Psoas muscle (tissue), 8 donors: ENCODE measurements at regions of chr19 and their contacts with region 1.

Region 1: GRCh38 chr19:37655689-37656371 is 565 bp upstream of the ZFP30 start:
- DNase-seq: peak; percentile 87 to 92
- ATAC-seq: peak; percentile 88 to 93 (median 90)
- H3K4me3 ChIP-seq: peak overlapping the region; percentile 75
- H3K27ac ChIP-seq: peak overlapping the region; percentile 90
- H3K4me1 ChIP-seq: peaks cover 15% of the 10 kb centered on the region
- H3K27me3 ChIP-seq: no peaks in the 10 kb centered on the region
- CTCF ChIP-seq: no peak

Region 2: GRCh38 chr19:37594304-37594981 is 61.4 kb before region 1 on chr19 and contains the starts of genes ZNF540 and ZNF571:
- intact Hi-C with region 1: loop called (anchors 5 to 10 kb)
- DNase-seq: peak; percentile 93 to 95
- ATAC-seq: peak; percentile 99 to 100 (median 99)
- H3K4me3 ChIP-seq: peak within 1 kb of the TSS; percentile 78
- H3K27ac ChIP-seq: peak within 1 kb of the TSS; percentile 82
- H3K4me1 ChIP-seq: peaks cover 16% of the 10 kb centered on the region
- H3K27me3 ChIP-seq: no peaks in the 10 kb centered on the region
- CTCF ChIP-seq: no peak
- total RNA-seq, gene ZNF540: 0.27 to 4.9 (median 1.4) TPM
- total RNA-seq, gene ZNF571: 1.3 to 2.4 (median 1.8) TPM

Region 3: GRCh38 chr19:37691881-37692504 is 36.2 kb after region 1 on chr19:
- intact Hi-C with region 1: loop called in 1 of 2 experiments (anchors 5 kb)
- DNase-seq: peak; percentile 85 to 86
- ATAC-seq: peak; percentile 73 to 97 (median 92)
- H3K4me3 ChIP-seq: peak overlapping the region; percentile 72
- H3K27ac ChIP-seq: peak overlapping the region; percentile 74
- H3K4me1 ChIP-seq: peaks cover 3% of the 10 kb centered on the region
- H3K27me3 ChIP-seq: no peaks in the 10 kb centered on the region
- CTCF ChIP-seq: no peak